ENCODE measurements at regions of chr18 and their contacts with region 1.

Region 1: DNA sequence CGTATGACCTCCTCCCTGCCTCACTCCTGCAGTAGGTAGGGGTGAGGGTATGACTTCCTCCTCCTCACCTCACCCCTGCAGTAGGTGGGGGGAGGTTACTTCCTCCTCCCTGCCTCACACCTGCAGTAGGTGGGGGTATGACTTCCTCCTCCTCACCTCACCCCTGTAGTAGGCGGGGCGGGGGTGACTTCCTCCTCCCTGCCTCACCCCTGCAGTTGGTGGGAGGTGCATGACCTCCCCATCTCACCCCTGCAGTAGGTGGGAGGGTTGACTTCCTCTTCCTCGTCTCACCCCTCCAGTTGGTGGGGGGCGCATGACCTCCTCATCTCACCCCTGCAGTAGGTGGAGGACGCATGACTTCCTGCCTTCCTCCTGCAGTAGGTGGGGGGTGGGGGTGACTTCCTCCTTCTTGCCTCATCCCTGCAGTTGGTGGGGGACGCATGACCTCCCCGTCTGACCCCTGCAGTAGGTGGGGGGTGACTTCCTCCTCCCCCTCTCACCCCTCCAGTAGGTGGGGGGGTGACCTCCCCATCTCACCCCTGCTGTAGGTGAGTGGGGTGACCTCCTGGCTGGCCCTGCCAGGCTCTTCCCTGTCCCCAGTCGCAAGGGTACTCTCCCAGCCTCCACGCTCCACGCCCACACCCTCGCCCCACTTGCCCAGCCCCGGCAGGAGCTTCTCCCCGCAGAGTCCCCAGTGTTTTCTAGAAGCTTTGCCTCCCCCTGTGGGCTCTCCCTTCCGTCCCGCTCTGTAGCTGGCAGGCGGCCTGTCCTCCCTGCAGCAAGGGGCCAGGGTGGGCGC is 39.3 kb downstream of the TSHZ1 start:
- DNase-seq: no peak
- ATAC-seq: peak; percentile 5

Region 2: GRCh38 chr18:75209129-75209950 is 40.5 kb before region 1 on chr18 and contains the start of gene PTGR3:
- intact Hi-C with region 1: loop called (anchors 2 kb)
- DNase-seq: peak; percentile 90
- ATAC-seq: peak; percentile 67
- total RNA-seq, gene PTGR3: 31.6 TPM

Region 3: DNA sequence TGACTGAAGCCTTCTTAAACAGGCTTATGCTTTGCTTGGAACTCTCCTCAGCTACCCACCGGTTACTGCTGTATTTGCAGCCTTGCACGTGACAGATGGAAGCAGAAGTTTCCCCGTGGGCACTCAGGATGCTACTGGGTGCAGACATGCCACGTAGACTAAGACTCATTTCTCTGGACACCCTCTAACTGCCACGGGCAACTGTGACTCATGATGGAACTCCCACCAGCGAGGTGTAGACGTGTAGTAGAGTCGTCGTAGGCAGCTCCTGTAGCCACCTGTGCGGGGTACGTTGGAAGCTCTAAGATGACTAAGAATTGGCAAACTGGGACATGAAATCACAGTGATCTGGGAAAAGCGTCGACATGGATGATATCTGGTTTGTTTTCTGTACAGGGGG is 11.8 kb before region 1 on chr18:
- intact Hi-C with region 1: no loop called
- DNase-seq: no peak
- ATAC-seq: no peak

Region 4: DNA sequence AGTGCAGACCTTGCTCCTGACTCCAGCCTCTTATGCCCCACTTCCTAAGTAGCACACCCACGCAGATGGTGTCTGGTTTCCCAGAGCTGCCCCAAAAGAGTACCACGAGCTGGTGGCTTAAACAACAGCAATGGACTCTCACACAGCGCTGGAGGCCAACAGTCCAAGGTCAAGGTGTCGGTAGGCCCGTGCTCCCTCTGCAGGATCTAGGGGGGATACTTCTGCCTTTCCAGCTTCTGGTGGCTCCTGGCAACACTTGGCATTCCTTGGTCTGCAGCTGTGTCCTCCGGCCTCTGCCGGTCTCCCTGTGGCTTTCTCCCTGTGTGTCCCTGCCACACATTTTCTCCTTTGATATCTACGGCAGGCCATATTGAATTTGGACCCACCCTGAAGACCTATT is 59.7 kb after region 1 on chr18:
- intact Hi-C with region 1: no loop called
- DNase-seq: no peak
- ATAC-seq: no peak

Region 5: DNA sequence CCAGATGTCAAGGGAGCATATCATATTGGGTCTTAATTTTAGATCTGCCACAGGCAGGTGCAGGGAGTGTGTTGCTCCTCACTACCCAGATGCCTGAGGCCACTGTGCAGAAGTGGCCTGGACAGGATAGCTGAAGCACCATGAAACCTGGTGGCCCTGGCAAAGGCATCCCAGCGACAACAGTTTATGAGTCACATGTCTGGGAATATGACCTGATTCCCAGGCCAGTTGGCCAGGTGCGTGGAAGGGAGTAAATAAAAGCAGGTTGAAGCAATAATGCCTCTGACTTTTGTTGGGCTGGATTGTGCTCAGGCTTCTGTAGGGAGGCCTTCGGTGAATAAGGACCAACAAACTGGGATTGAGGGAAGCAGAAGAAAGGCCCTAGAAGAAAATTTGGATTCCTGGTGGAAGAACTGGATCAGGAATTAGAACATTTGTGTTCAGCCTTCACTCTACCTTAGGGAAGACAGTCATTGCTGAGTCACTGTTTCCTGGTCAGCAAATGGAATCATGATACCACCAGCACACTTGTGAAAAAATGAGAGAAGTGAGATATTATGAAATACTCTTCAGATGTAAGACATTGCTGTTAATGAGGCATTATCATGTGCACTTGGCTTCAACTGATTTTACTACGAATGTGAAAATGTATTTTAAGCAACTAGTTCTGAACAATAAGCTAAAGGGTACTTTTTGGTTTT is 1323.6 kb after region 1 on chr18:
- intact Hi-C with region 1: no loop called
- DNase-seq: no peak
- ATAC-seq: peak; percentile 82